Psoas muscle (tissue), 8 donors: ENCODE measurements at regions of chr12 and their contacts with region 1.

Region 1: DNA sequence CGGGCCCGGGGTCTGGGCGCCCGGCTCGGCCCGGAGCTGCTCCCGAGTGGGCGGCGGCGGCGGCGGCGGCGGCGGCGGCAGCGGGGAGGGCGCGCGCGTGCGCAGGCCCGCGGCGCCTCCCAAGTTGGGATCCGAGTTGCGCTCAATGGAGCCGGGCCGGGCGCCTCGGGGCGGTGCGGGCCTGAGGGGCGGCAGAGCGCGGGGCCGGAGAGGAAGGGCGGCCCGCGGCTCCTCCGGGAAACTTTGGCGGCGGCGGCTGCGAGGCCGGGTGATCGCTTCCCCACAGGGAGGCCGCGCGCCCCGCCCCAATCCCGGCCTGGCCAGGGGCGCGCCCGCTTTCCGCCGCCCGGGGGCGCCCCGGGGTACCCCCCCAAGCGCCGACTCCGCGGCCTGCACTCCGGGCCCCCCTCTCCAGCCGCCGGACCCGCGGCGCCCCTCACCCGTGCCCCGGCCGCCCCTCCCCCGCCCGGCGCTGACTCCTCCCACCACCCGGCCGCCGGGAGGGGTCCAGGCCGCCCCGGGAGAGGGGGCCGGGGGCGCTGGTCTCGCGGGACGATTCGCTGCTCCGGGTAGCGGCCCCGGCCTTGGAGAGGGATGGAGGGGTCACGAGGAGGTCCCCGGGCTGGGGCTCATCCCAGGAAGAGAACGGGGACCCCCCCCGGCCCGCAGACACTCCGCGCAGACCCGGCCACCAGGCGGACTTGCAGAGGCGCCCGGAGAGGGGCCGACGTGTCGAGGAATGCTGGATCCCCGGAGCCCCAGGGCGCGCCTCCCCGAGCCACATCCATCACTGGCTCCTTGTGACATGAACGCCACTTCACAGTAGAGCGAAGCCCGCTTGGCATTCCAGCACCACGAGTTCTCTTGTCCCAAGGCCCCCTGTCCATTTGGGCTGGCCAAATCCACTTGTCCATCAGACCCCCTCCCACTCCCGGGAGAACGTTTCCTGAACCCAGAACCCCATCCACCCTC is at the start of gene RILPL1:
- DNase-seq: peak; percentile 64 to 75
- ATAC-seq: peak; percentile 55 to 71 (median 62)
- H3K4me3 ChIP-seq: peak within 1 kb of the TSS; percentile 91
- H3K27ac ChIP-seq: peak within 1 kb of the TSS; percentile 93
- H3K4me1 ChIP-seq: peaks cover 28% of the 10 kb centered on the region
- H3K27me3 ChIP-seq: no peaks in the 10 kb centered on the region
- CTCF ChIP-seq: peak; percentile 34
- total RNA-seq, gene RILPL1: 43.7 to 73.7 (median 59.0) TPM

Region 2: DNA sequence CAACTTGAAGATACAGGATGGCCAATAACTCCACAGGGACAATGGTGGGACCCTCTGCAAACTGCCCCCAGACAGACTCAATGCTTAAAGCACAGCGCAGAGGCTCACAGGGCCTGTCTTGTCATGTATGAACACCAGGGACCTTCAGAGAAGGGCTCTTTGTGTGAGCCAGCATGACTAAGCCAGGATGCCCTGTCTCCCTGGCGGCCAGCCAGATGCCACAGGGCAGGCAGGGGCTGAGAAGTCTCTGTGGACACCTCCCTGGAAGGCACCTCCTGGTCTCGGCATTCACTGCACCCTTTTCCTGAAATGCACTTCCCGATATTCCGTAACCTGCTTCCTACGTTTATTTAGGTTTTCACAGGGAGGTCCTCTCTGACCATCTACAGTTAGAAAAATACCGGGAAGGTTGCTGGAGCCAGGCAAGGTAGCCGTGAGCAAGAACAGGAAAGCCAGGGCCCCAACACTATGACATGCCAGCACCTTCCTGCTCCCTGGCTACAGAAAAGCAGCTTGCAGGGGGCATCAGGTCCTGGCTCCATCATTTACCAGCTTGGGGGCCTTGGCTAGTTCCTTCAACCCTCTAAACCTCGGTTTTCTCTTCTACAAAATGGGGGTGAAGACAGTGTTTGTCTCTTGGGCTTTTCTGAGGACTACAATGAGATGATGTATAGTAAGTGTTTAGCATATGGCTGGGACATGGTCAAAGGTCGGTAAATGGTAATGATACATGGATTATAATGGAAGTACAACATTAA is 448.0 kb before region 1 on chr12:
- intact Hi-C with region 1: no loop called
- DNase-seq: peak; percentile 71 to 84
- ATAC-seq: peak; percentile 85 to 95 (median 92)
- H3K4me3 ChIP-seq: no peak overlapping the region
- H3K27ac ChIP-seq: no peak overlapping the region
- H3K4me1 ChIP-seq: peaks cover 28% of the 10 kb centered on the region
- H3K27me3 ChIP-seq: no peaks in the 10 kb centered on the region
- CTCF ChIP-seq: no peak

Region 3: DNA sequence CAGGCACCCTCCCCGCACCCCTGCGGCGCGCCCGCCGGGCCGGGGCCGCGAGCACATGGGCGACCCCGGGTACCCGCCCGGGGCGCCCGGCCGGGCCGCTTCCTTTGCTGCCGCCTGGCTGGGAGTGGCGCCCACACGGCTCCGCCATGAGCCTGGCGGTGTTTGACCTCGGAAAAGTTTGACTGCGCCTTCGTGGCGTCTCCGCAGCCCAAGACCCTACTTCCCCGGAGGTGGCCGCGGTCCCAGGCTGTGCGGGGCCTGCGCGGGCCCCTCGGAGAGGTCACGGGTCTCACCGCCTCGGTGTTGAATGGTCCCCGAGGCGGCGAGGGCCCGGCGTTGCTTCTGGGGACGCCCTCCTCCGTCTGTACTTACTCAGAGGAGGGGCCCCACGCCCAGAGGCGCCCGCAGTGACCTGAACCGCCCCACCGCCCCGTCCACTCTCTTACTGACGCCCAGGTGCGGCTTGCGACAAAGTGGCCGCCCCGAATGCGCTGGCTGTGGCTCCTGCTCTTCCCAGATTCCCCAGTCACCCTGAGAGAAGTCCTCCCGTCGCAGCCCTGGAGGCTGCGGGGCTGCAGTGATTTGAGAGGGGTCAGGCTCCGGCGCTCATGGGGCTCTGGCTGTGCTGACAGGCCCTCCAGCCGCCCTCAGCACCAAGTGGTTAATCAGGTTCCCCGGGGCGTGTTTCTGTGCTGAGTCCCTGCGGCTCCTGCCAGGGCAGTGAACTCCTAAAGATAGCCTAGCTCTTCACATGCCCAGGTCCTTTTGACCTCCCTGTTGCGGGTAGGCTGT is 144.2 kb before region 1 on chr12:
- intact Hi-C with region 1: loop called in 1 of 2 experiments (anchors 5 kb)
- DNase-seq: peak; percentile 43 to 87
- ATAC-seq: peak; percentile 68 to 86 (median 86)
- H3K4me3 ChIP-seq: peak overlapping the region; percentile 73
- H3K27ac ChIP-seq: peak overlapping the region; percentile 91
- H3K4me1 ChIP-seq: peaks cover 40% of the 10 kb centered on the region
- H3K27me3 ChIP-seq: no peaks in the 10 kb centered on the region
- CTCF ChIP-seq: no peak

Region 4: GRCh38 chr12:123457980-123458783 is 75.8 kb before region 1 on chr12 and contains the start of gene SNRNP35:
- intact Hi-C with region 1: loop called in 1 of 2 experiments (anchors 5 kb)
- DNase-seq: peak; percentile 86 to 90
- ATAC-seq: peak; percentile 67 to 84 (median 76)
- H3K4me3 ChIP-seq: peak within 1 kb of the TSS; percentile 96
- H3K27ac ChIP-seq: peak within 1 kb of the TSS; percentile 99
- H3K4me1 ChIP-seq: peaks cover 12% of the 10 kb centered on the region
- H3K27me3 ChIP-seq: no peaks in the 10 kb centered on the region
- CTCF ChIP-seq: no peak
- total RNA-seq, gene SNRNP35: 19.8 to 35.1 (median 25.5) TPM

Region 5: DNA sequence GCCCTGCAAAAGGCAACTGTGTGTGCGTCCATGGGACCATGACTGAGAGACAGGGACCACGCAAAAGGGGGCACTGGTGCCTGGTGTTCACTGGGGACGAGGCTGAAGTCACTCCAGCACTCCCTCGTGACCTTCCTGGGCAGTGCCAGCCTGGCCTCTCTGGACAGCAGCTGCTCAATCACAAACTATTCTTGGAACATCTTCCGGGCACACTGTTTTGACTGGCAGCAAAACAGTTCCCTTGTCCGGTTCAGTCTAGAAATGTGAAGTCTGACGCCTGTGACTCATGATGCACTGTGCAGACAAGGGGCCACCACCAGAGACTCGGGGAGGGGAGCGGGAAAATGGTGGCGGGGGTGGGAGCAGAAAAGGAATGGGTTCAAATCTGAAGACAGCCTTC is 55.2 kb before region 1 on chr12:
- intact Hi-C with region 1: loop called in 1 of 2 experiments (anchors 5 kb)
- DNase-seq: peak; percentile 74 to 92
- ATAC-seq: peak; percentile 86 to 89 (median 88)
- H3K4me3 ChIP-seq: peak overlapping the region; percentile 44
- H3K27ac ChIP-seq: peak overlapping the region; percentile 97
- H3K4me1 ChIP-seq: peaks cover 49% of the 10 kb centered on the region
- H3K27me3 ChIP-seq: no peaks in the 10 kb centered on the region
- CTCF ChIP-seq: no peak

Region 6: DNA sequence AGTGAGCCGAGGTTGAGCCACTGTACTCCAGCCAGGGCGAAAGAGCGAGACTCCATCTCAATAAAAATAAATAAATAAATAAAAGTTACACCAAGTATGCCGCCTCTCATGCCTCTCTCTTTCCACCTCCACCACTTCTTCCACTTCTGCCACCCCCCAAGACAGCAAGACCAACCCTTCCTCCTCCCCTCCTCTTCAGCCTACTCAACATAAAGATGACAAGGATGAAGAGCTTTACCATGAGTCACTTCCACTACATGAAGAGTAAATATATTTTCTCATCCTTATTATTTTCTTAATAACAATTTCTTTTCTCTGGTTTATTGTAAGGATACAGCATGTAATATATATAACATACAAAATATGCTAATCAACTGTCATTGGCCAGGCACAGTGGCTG is 46.8 kb after region 1 on chr12:
- intact Hi-C with region 1: loop called (anchors 5 kb)
- DNase-seq: no peak
- ATAC-seq: no peak
- H3K4me3 ChIP-seq: no peak overlapping the region
- H3K27ac ChIP-seq: peak overlapping the region; percentile 85
- H3K4me1 ChIP-seq: peaks cover 21% of the 10 kb centered on the region
- H3K27me3 ChIP-seq: no peaks in the 10 kb centered on the region
- CTCF ChIP-seq: no peak